ENCODE measurements at regions of chr1 and their contacts with region 1.

Region 1: DNA sequence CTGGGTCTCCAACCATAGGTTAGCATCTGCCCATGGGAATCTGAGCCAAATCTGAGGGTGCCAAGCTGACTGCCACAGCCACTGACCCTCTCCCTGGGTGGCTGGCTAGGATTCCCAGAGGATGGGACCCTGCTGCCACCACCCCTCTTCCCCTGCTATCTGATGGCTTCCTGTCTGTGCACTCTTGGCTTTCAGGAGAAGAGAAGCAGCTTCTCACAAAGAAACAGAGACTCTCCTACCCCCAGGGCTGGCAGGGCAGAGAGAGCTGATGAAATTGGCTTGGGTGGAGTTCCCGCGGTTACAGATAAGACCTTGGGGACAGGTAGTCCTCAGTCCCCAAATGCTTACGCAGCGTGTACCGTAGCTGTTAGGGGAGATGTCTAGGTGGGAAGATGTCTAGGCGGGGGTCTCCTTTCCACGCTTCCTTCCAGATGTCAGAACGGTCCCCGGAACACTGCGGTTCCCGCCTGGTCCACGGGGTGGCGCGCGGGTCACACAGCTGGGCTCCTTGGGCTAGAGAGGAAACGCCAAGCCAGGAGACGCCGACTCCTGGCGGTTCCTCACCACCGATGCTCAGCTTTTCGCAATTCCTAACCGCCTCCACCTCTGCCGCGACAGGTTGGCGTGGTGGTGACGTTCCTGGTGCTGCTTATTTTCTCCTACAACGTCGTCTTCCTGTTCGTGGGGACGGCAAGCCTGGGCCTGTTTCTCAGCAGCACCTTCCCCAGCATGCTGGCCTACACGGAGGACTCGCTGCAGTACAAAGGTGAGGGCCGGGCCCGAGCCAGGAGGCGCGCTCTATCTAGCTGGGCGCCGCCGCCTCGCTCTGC is 40.1 kb downstream of the ELK4 start:
- DNase-seq: peak; percentile 89 to 94
- H3K4me3 ChIP-seq: peak overlapping the region; percentile 20 to 57 (median 39)
- H3K27ac ChIP-seq: peak overlapping the region; percentile 64 to 71
- H3K4me1 ChIP-seq: peaks cover 0 to 6% of the 10 kb centered on the region in 2 donors
- H3K27me3 ChIP-seq: no peaks in the 10 kb centered on the region
- CTCF ChIP-seq: peak; percentile 99 to 100 (median 99)
- POLR2A ChIP-seq: no peak

Region 2: GRCh38 chr1:205645519-205645918 is 53.8 kb after region 1 on chr1:
- intact Hi-C with region 1: loop called (anchors 10 kb)
- DNase-seq: no peak
- H3K4me3 ChIP-seq: no peak overlapping the region
- H3K27ac ChIP-seq: no peak overlapping the region
- H3K4me1 ChIP-seq: no peaks in the 10 kb centered on the region
- H3K27me3 ChIP-seq: no peaks in the 10 kb centered on the region
- CTCF ChIP-seq: no peak
- POLR2A ChIP-seq: no peak